Common myeloid progenitor, CD34-positive (primary cell): ENCODE measurements at regions of chr11 and their contacts with region 1.

Region 1: DNA sequence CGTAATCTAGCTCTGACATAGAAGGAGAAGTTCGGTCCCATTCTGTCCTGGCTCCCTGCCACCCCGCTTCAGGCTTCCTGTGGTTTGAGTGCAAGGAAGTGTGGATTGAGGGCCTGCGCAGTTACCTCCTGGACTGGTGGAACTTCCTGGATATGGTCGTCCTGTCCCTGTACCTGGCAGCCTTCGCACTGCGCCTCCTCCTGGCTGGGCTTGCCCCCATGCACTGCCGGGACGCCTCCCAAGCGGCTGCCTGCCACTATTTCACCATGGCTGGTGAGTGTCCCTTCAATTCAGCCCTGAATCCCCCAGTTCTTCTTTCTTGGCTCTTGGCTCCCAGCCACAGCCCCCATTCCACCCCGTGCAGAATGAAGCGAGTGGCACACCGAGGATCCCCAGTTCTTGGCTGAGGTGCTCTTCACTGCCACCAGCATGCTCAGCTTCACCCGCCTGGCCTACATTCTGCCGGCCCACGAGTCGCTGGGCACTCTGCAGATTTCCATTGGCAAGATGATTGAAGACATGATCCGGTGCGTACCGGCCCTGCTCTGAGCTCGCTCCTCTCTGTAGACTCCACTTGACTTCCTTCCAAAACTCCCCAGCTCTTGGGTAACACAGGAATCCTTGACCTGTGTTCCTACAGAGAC is 15.4 kb downstream of the ART5 start:
- DNase-seq: peak; percentile 96 to 99 (median 99)
- H3K4me3 ChIP-seq: peak overlapping the region in 4 of 7 experiments; percentile 32 to 73 (median 47)
- H3K27ac ChIP-seq: peak overlapping the region; percentile 17 to 35
- H3K4me1 ChIP-seq: peaks cover 0 to 28% (median 15%) of the 10 kb centered on the region in 4 experiments
- H3K27me3 ChIP-seq: no peaks in the 10 kb centered on the region

Region 2: GRCh38 chr11:3609416-3610265 is 16.8 kb before region 1 on chr11:
- CTCF ChIA-PET with region 1: interaction called, 30 read pairs
- POLR2A ChIA-PET with region 1: interaction called, 8 read pairs
- DNase-seq: peak; percentile 48 to 61 (median 52)
- H3K4me3 ChIP-seq: no peak overlapping the region
- H3K27ac ChIP-seq: no peak overlapping the region
- H3K4me1 ChIP-seq: peaks cover 0 to 12% (median 11%) of the 10 kb centered on the region in 4 experiments
- H3K27me3 ChIP-seq: no peaks in the 10 kb centered on the region

Region 3: DNA sequence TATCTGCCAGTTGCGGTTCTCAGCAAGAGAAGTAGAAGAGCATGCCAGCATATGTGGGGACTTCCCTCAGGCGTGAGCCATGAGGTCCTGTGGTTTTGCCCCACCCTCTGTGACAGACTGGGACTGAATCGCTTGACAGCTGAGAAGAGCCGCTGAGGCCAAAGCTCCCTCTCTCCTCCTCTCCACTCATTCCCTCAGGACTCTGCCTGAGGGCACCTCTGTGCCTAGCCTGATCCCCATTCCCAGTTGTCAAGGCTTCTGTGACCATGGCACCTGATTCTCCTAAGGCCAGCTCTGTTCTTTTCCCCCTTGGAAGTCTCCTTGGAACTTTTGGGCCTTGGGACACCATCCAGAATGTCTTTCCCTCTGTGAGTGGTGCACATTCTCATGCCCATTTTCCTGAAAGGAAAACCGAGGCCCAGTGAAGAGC is 11.7 kb before region 1 on chr11:
- CTCF ChIA-PET with region 1: interaction called, 30 read pairs
- POLR2A ChIA-PET with region 1: interaction called, 8 read pairs
- DNase-seq: peak; percentile 82 to 95 (median 95)
- H3K4me3 ChIP-seq: peak overlapping the region in 1 of 7 experiments; percentile 29
- H3K27ac ChIP-seq: no peak overlapping the region
- H3K4me1 ChIP-seq: peaks cover 6 to 29% (median 18%) of the 10 kb centered on the region in 4 experiments
- H3K27me3 ChIP-seq: no peaks in the 10 kb centered on the region

Region 4: GRCh38 chr11:3662822-3663221 is 36.4 kb after region 1 on chr11:
- CTCF ChIA-PET with region 1: no interaction called
- POLR2A ChIA-PET with region 1: no interaction called
- DNase-seq: no peak
- H3K4me3 ChIP-seq: no peak overlapping the region
- H3K27ac ChIP-seq: no peak overlapping the region
- H3K4me1 ChIP-seq: peaks cover 0 to 10% (median 3%) of the 10 kb centered on the region in 4 experiments
- H3K27me3 ChIP-seq: no peaks in the 10 kb centered on the region

Region 5: DNA sequence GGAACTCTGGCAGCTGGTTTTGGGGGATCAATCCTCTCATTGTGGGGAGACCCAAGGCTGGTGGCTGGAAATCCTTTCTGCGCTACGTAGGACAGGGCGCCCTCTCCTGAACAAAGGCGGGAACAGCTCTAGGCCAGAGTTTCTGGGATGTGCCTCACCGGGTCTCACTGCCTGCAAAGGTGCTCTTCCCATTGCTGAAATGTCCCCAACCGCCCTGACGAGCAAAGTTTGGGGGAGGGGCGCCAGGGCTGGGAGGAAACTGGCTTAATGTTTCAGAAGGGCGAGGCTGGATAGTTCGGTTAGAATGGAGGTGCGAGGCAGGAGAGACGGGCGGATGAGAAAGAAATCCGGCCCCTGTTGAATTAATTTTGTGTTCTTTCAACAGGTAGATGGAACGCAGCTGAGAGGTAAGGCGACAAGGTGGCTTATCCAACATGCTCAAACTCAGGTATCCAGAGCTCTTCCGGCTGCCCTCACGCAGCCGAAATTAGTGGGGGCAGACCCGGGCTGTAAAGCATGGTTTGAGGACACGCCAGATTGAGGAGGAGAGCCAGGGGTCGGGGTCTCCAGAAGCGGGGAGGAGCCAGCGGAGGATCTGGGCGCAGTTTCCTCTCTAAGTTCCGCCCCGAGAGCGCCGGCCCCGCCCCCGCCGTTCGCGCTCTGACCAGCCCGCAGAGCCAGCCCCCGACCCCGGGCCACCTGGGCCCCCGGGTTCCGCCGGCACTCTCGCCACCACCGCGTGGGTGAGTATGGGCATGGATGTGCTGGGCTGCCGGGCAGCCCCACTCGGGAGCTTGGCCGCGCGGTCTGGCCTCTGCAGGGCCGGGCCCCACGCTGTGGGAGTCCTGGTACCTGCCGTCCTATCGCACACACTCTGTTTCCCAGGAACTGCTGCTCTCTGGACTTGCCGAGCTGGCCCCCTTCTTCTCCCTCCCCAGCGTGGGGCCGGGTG is 181.8 kb after region 1 on chr11 and contains the start of gene PGAP2:
- CTCF ChIA-PET with region 1: no interaction called
- POLR2A ChIA-PET with region 1: no interaction called
- DNase-seq: peak; percentile 57 to 70 (median 65)
- H3K4me3 ChIP-seq: peak within 1 kb of the TSS; percentile 71 to 98 (median 91)
- H3K27ac ChIP-seq: peak within 1 kb of the TSS; percentile 46 to 82
- H3K4me1 ChIP-seq: peaks cover 0 to 19% (median 12%) of the 10 kb centered on the region in 4 experiments
- H3K27me3 ChIP-seq: no peaks in the 10 kb centered on the region